ENCODE measurements at regions of chr18 and their contacts with region 1.

Region 1: DNA sequence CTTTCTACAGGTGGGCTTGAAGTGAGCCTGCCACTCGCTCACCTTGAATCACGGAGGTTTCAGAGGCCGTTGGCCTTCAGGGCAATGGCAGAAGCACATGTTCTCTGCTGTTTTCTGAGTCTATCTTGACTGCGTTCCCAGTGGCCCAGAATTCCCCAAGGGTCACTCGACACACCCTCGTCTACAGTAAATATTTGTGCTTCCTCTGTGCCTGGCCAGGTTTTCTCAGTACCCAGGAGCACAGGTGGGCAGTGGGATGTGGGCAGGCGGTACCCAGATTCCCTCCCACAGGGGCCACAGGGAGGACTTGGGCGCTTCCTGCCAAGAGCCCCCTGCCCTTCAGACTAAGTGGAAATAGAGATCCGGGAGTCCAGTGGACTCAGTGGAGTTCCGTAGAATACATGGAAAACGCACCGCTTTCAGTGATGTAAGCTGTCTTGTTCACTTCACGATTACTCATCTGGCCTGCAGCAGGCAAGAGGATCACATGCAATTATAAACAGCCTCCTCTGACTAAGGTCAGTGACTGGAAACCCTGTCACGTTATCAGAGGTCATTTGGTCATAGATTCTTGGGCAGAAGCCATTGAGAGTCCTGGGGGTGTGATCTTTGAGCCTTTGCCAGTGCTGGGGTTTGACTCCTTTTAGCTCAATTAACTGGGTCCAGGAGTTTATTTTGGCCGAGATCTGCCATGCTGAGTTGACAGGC is 179.8 kb downstream of the NEDD4L start:
- DNase-seq: peak; percentile 96
- H3K4me3 Mint-ChIP-seq: peak overlapping the region; percentile 84
- H3K27ac Mint-ChIP-seq: peak overlapping the region; percentile 98
- H3K4me1 Mint-ChIP-seq: peaks cover 27% of the 10 kb centered on the region
- H3K27me3 Mint-ChIP-seq: no peaks in the 10 kb centered on the region
- CTCF ChIP-seq: no peak

Region 2: GRCh38 chr18:58043491-58044379 is 180.1 kb before region 1 on chr18 and contains the start of gene NEDD4L:
- CTCF ChIA-PET with region 1: interaction called, 6 read pairs
- POLR2A ChIA-PET with region 1: interaction called, 32 read pairs
- intact Hi-C with region 1: no loop called
- DNase-seq: peak; percentile 83
- H3K4me3 Mint-ChIP-seq: peak within 1 kb of the TSS; percentile 88
- H3K27ac Mint-ChIP-seq: peak within 1 kb of the TSS; percentile 80
- H3K4me1 Mint-ChIP-seq: peaks cover 19% of the 10 kb centered on the region
- H3K27me3 Mint-ChIP-seq: no peaks in the 10 kb centered on the region
- CTCF ChIP-seq: peak; percentile 83
- total RNA-seq, gene NEDD4L: 75.1 and 108 TPM in 2 replicates

Region 3: GRCh38 chr18:58186258-58186948 is 37.5 kb before region 1 on chr18:
- CTCF ChIA-PET with region 1: interaction called, 19 read pairs
- POLR2A ChIA-PET with region 1: interaction called, 171 read pairs
- intact Hi-C with region 1: loop called (anchors 2 kb)
- DNase-seq: peak; percentile 80
- H3K4me3 Mint-ChIP-seq: peak overlapping the region; percentile 39
- H3K27ac Mint-ChIP-seq: peak overlapping the region; percentile 79
- H3K4me1 Mint-ChIP-seq: peaks cover 25% of the 10 kb centered on the region
- H3K27me3 Mint-ChIP-seq: no peaks in the 10 kb centered on the region
- CTCF ChIP-seq: no peak

Region 4: DNA sequence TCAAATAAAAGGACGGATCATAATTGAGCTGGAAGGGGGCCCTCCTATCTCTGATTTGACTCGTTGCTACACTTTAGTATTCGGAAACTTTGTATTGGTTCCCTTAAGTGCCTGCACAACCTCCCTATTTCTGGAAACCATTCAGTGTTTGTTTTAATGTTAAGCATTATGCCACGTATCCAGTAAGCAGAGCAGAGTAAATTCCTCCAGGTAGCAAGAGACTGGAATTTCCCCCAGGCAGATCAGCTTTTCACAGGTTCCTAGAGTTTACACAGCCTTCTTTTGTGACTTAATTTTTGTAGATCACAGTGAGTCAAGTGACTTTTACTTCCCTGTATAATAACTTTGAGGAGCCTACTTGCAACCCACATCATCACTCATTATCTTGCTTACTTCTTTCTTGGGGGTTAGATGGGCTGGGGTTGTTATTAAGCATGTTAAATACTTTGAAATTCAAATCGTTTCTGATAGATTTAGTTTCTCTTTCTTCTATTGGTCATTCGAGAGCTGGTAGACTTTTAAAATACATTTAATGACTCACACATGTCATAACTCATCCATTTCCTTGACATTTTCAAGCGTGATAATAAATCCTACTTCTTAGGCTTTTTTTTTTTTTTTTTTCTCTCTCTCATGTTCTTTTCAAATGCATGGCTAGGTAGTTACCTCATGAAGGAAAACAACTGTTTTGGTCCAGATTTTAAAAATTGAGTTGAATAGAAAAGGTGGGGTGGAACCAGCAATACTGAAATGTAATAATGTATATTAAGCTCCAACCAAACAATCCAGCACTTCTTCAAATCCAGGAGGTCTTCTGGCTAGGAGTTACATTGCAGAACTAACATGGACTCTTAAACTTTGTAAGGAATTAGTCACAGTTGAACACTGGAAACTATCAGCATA is 39.4 kb after region 1 on chr18:
- CTCF ChIA-PET with region 1: no interaction called
- POLR2A ChIA-PET with region 1: interaction called, 27 read pairs
- intact Hi-C with region 1: no loop called
- DNase-seq: peak; percentile 56
- H3K4me3 Mint-ChIP-seq: peak overlapping the region; percentile 77
- H3K27ac Mint-ChIP-seq: peak overlapping the region; percentile 86
- H3K4me1 Mint-ChIP-seq: peaks cover 33% of the 10 kb centered on the region
- H3K27me3 Mint-ChIP-seq: no peaks in the 10 kb centered on the region
- CTCF ChIP-seq: no peak

Region 5: GRCh38 chr18:58302811-58303210 is 78.9 kb after region 1 on chr18:
- CTCF ChIA-PET with region 1: no interaction called
- POLR2A ChIA-PET with region 1: interaction called, 16 read pairs
- intact Hi-C with region 1: no loop called
- DNase-seq: no peak
- H3K4me3 Mint-ChIP-seq: no peak overlapping the region
- H3K27ac Mint-ChIP-seq: no peak overlapping the region
- H3K4me1 Mint-ChIP-seq: peaks cover 15% of the 10 kb centered on the region
- H3K27me3 Mint-ChIP-seq: no peaks in the 10 kb centered on the region
- CTCF ChIP-seq: no peak

Region 6: DNA sequence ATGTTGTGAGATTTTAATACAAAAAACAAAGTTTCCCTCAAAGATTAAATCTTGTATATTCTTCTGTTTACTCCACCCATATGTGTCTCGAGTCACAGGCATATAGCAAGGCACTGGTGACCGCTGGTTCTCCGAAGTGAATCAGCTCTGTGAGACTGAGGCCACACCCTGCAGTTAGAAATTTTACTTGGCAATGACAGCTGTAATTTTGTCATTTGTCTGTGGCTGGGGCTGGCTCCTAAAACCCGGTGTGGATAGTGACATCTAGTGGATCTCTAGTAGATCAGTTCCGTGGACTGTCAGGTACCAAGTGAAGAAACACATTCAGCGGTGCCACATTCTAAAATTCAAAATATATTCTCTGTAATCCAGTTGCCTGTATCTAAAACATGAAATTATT is 98.1 kb after region 1 on chr18:
- CTCF ChIA-PET with region 1: interaction called, 4 read pairs
- POLR2A ChIA-PET with region 1: interaction called, 145 read pairs
- intact Hi-C with region 1: loop called (anchors 1 kb)
- DNase-seq: peak; percentile 91
- H3K4me3 Mint-ChIP-seq: peak overlapping the region; percentile 50
- H3K27ac Mint-ChIP-seq: peak overlapping the region; percentile 85
- H3K4me1 Mint-ChIP-seq: peaks cover 14% of the 10 kb centered on the region
- H3K27me3 Mint-ChIP-seq: no peaks in the 10 kb centered on the region
- CTCF ChIP-seq: peak; percentile 48